CD8-positive, alpha-beta T cell (primary cell): ENCODE measurements at regions of chr6 and their contacts with region 1.

Region 1: GRCh38 chr6:15628499-15629131 is 34.2 kb downstream of the DTNBP1 start:
- DNase-seq: peak in 7 of 9 experiments; percentile 9 to 73 (median 45)
- ATAC-seq: peak; percentile 71
- H3K4me3 ChIP-seq: peak overlapping the region in 1 of 2 experiments; percentile 0
- H3K4me3 Mint-ChIP-seq: peak overlapping the region; percentile 47
- H3K27ac ChIP-seq: no peak overlapping the region
- H3K27ac Mint-ChIP-seq: peak overlapping the region; percentile 42
- H3K4me1 ChIP-seq: peaks cover 27% of the 10 kb centered on the region
- H3K4me1 Mint-ChIP-seq: peaks cover 56% of the 10 kb centered on the region
- H3K27me3 ChIP-seq: no peaks in the 10 kb centered on the region
- H3K27me3 Mint-ChIP-seq: no peaks in the 10 kb centered on the region
- CTCF ChIP-seq: no peak

Region 2: GRCh38 chr6:15585760-15586214 is 42.8 kb before region 1 on chr6:
- CTCF ChIA-PET with region 1: no interaction called
- POLR2A ChIA-PET with region 1: no interaction called
- intact Hi-C with region 1: loop called in 1 of 2 experiments (anchors 1 kb)
- DNase-seq: no peak
- ATAC-seq: no peak
- H3K4me3 ChIP-seq: no peak overlapping the region
- H3K4me3 Mint-ChIP-seq: no peak overlapping the region
- H3K27ac ChIP-seq: no peak overlapping the region
- H3K27ac Mint-ChIP-seq: no peak overlapping the region
- H3K4me1 ChIP-seq: no peaks in the 10 kb centered on the region
- H3K4me1 Mint-ChIP-seq: peaks cover 29% of the 10 kb centered on the region
- H3K27me3 ChIP-seq: no peaks in the 10 kb centered on the region
- H3K27me3 Mint-ChIP-seq: no peaks in the 10 kb centered on the region
- CTCF ChIP-seq: no peak

Region 3: GRCh38 chr6:15662326-15663129 is 33.9 kb after region 1 on chr6 and contains the start of gene DTNBP1:
- CTCF ChIA-PET with region 1: interaction called, 6 read pairs
- POLR2A ChIA-PET with region 1: interaction called, 3 read pairs
- intact Hi-C with region 1: loop called in 1 of 2 experiments (anchors 5 kb)
- DNase-seq: peak; percentile 58 to 90 (median 82)
- ATAC-seq: peak; percentile 73
- H3K4me3 ChIP-seq: peak within 1 kb of the TSS; percentile 67 to 76
- H3K4me3 Mint-ChIP-seq: peak within 1 kb of the TSS; percentile 83
- H3K27ac ChIP-seq: peak within 1 kb of the TSS; percentile 55 to 73
- H3K27ac Mint-ChIP-seq: peak within 1 kb of the TSS; percentile 73
- H3K4me1 ChIP-seq: peaks cover 7% of the 10 kb centered on the region
- H3K4me1 Mint-ChIP-seq: peaks cover 41% of the 10 kb centered on the region
- H3K27me3 ChIP-seq: no peaks in the 10 kb centered on the region
- H3K27me3 Mint-ChIP-seq: peaks cover 2% of the 10 kb centered on the region
- CTCF ChIP-seq: no peak
- total RNA-seq, gene DTNBP1: 12.3 to 12.6 TPM